ENCODE measurements at regions of chr11 and their contacts with region 1.

Region 1: DNA sequence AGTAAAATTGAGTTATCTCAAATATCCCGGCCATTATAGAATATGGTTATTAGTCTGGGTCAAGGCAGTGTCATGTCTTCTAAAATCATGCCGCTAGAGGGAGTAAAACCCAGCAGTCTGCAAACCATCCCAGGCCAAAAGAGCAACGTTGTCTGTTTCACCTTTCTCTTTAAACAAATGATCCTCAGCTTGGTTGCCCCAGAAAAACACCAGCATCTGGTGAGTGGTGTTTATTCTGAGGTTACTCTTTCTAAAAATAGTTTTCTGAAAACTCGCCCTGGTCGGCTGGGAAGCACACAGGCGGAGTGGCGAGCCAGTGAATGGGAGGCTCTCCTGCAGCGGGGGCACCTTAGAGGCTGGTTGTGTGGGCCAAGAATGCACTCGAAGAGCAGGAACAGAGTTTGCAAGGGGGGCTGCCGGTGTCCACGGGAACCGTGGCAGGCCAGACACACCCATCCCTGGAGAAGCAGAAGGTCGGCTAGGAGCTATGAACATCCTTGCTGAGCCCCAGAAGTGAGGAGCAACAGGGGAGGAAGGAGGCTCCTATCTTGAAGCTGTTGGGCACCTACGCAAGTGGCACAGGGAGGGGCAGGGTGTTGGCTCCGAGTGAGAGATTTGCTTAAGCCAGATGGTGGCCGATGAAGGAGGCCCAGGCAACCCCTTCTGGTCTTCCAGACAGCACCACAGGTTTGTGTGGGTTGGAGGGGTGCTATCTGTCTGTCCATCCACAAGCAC is 297.1 kb downstream of the ETS1 start:
- DNase-seq: no peak
- H3K4me3 ChIP-seq: peak overlapping the region in 3 of 4 donors; percentile 26 to 44 (median 26)
- H3K27ac ChIP-seq: peak overlapping the region; percentile 43 to 58 (median 54)
- H3K4me1 ChIP-seq: peaks cover 23 to 32% (median 31%) of the 10 kb centered on the region in 4 donors
- H3K27me3 ChIP-seq: no peaks in the 10 kb centered on the region
- CTCF ChIP-seq: peak; percentile 84 to 87 (median 85)
- EP300 ChIP-seq: no peak
- POLR2A ChIP-seq: no peak

Region 2: DNA sequence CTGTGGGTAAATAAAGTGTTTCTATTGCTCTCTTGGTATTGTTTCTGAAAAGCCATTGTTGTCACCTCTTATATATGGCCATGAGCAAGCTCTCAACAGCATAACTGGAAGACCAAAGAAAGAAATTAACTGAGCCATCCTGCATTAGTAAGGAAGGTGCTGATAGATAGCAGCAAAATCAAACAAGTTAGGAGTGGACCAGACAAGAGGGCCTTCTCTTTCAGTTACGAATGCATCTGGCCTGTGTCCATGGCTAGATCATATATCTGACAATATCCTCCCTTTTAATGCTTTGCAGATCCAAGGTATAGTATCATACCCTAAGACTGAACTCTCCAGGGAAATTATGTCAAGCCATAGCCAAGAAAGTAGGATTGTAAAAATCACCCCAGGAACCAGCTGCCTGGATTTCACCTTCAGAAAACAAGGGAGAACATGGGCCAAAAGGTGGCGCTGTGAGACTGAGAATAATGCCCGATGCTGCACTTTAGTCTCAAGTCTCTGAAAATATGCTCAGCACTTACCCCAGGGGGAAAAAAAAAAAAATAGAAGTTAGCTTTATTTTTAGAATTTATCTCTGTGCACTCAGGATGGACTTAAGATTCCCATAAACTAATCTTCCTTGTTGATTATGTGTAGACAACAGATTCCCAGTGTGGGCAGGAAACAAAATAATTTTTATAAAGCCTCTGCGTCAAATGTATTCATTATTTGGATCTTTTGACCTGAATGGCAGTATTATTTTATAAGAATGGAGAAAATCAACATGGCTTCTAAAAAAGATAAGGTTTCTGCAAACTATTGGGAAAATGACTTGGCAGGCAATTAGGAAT is 118.0 kb before region 1 on chr11:
- intact Hi-C with region 1: loop called (anchors 2 kb)
- DNase-seq: peak; percentile 94
- H3K4me3 ChIP-seq: no peak overlapping the region
- H3K27ac ChIP-seq: no peak overlapping the region
- H3K4me1 ChIP-seq: peaks cover 0 to 6% (median 2%) of the 10 kb centered on the region in 4 donors
- H3K27me3 ChIP-seq: no peaks in the 10 kb centered on the region
- CTCF ChIP-seq: peak; percentile 77 to 78 (median 77)
- EP300 ChIP-seq: no peak
- POLR2A ChIP-seq: no peak

Region 3: DNA sequence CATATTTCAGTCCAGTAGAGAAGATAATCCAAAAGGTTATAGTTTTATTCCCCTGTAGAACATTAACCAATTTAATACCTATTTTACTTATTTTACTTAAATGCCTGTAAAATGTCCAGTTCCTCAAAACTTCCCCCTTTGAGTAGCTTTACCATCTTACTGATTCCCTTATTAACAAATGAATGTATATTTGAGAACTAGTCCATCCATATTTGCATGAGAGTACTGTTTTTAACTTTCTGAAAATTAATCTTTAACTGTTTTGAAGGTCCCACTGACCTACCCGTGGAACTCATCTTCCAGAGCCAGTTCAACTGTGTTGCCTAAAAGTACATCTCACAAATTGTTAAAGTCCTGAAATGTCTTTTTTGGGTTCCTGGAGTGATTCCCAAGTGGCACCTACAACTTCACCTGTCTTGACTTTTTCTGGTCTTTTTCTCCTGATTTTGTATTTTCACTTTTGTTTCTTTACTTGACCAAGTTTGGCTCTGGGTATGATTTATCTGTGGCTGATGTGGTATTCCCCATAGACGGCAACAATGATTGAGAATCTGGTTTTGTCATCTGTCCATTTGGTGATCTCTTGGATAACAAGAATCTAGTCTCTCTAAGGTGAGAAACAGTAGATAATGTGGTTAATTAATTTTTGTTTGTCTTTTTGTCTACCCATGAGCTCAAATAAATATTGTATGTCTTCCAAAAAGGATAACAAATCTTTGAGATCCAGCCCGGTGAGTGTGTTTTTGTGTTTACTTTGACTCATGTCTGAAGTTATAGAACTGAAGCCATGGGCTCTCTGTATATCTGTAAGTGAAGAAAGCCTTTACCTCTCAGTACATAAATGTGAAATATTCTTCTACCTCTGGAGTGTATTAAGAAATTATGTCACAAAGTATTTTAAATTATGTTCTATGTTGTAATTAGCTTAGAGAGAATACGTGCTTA is 122.8 kb after region 1 on chr11:
- intact Hi-C with region 1: loop called (anchors 10 kb)
- DNase-seq: no peak
- H3K4me3 ChIP-seq: no peak overlapping the region
- H3K27ac ChIP-seq: no peak overlapping the region
- H3K4me1 ChIP-seq: peaks cover 7 to 32% (median 21%) of the 10 kb centered on the region in 4 donors
- H3K27me3 ChIP-seq: no peaks in the 10 kb centered on the region
- CTCF ChIP-seq: no peak
- EP300 ChIP-seq: no peak
- POLR2A ChIP-seq: no peak

Region 4: GRCh38 chr11:128508770-128509510 is 218.7 kb after region 1 on chr11:
- intact Hi-C with region 1: no loop called
- DNase-seq: no peak
- H3K4me3 ChIP-seq: no peak overlapping the region
- H3K27ac ChIP-seq: peak overlapping the region in 3 of 4 donors; percentile 71 to 81 (median 77)
- H3K4me1 ChIP-seq: peaks cover 91 to 99% (median 97%) of the 10 kb centered on the region in 4 donors
- H3K27me3 ChIP-seq: no peaks in the 10 kb centered on the region
- CTCF ChIP-seq: no peak
- EP300 ChIP-seq: no peak
- POLR2A ChIP-seq: no peak

Region 5: DNA sequence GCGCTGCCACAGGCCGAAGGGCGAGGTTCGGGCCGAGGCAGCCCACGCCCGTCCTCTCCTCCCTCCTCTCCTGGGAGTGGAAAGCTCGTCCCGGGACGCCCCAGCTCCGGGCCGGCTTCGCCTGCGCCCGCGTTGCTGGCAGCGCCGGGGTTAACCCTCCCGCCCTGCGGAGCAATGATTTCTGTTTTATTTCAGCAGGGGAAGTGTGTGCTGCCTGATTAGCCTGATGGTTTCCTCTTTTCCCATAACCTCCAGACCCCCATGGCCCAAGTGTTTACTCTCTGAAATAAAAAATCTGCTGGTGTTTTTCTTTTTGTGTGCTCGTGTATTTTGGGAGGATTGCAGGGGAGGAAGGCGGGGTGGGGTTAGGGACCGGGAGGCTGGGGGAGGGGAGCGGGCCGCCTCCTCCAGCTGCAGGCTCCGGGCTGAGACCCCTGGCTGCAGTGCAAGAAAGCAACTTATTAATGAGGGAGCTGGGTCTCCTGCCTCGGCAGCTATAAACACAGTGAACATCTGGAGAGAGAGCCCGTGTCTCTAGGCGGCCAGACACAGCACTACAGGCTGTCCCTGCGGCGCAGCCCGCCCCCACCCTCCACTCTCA is 258.5 kb after region 1 on chr11:
- intact Hi-C with region 1: loop called (anchors 10 kb)
- DNase-seq: no peak
- H3K4me3 ChIP-seq: peak overlapping the region; percentile 50 to 63 (median 54)
- H3K27ac ChIP-seq: peak overlapping the region; percentile 66 to 82 (median 79)
- H3K4me1 ChIP-seq: peaks cover 49 to 55% (median 51%) of the 10 kb centered on the region in 4 donors
- H3K27me3 ChIP-seq: peaks cover 0 to 5% (median 0%) of the 10 kb centered on the region in 4 donors
- CTCF ChIP-seq: peak in 2 of 3 experiments; percentile 5 to 6
- EP300 ChIP-seq: no peak
- POLR2A ChIP-seq: no peak

Region 6: DNA sequence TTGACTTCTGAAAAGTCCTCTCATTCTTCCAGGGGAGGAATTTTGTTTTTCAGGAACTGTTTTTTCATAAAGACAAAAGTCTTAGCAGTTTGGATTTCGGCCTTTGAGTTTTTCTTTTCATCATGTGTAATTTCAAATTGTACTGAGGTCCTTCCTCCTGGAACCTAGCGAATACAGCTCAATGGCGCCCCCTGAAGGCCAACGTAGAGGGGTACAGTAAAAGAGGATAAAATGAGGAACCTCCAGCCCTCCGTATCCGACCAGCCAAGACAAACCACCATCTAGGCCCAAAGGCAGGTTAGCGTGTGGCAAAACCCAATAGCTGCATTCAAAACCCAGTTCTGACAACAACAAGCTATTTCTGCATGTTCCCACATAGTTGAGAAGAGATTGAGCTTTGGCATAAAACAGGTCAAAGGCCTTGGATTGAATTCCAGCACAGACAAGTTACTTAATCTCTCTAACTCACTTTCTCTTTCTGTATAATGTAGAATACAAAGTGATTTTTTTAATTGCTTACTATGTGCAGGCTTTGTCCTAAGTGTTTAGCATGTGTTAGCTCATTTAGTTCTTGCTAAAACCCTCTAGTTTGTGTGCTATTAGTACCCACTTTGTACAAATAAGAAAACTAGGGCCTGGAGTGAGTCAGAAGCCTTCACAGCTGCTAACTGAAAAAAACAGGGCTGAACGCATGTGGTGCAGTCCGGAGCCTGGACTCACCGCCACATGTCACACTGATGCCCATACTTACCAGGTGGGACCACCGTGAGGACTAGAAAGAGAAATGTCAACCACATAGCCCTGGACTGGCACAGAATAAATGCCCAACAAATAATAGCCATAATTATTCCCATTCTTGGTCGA is 340.3 kb after region 1 on chr11:
- intact Hi-C with region 1: loop called (anchors 2 kb)
- DNase-seq: peak; percentile 96
- H3K4me3 ChIP-seq: peak overlapping the region in 1 of 4 donors; percentile 5
- H3K27ac ChIP-seq: peak overlapping the region in 1 of 4 donors; percentile 32
- H3K4me1 ChIP-seq: peaks cover 14 to 17% (median 14%) of the 10 kb centered on the region in 4 donors
- H3K27me3 ChIP-seq: no peaks in the 10 kb centered on the region
- CTCF ChIP-seq: peak; percentile 83 to 91 (median 89)
- EP300 ChIP-seq: no peak
- POLR2A ChIP-seq: no peak